Activated T-helper 1 cell treated with anti-CD3 and anti-CD28 coated beads, Interleukin-12 subunit alpha, Interleukin-12 subunit beta, Interleukin-2, Interleukin-4 antibody, amounts not matched to agents 30 ng/mL and 10 ng/mL and 1 ng/mL, durations not matched to agents 14 hours and 24 hours and 36 hours (primary cell): ENCODE measurements at regions of chr13 and their contacts with region 1.

Region 1: GRCh38 chr13:40813661-40814454 is 24.4 kb downstream of the SLC25A15 start:
- DNase-seq: no peak
- H3K4me3 Mint-ChIP-seq: no peak overlapping the region
- H3K27ac Mint-ChIP-seq: no peak overlapping the region
- H3K4me1 Mint-ChIP-seq: peaks cover 7% of the 10 kb centered on the region
- H3K27me3 Mint-ChIP-seq: no peaks in the 10 kb centered on the region

Region 2: DNA sequence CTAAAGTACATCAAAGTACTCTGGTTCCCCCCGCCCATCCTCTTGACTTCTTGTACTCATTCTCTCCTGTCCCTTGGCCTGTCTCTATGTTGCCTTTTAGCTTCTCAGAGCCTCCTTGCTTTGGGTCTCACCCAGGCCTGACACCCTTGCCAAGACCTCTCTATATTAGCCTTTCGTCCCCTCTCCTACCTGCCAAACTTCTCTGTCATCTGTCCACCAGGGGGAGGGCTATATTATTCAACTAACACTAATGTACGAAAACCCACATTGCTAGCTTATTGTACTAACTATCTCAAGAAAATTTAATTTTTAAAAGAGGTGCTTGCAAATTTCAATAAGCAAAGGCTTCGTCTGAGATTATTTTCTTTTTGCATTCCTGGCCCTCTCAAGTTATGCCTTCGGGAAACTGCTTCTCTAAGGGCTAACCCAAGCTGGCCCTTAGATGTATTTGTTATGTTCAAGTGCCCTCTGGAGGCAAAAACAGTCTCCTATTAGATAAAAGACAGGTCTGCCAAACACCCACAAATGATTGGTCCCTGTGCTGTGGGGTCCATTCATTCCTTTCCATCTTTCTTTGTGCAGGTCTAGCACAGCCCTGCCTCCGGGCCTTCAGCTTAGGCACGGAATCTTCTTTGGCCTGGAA is 36.6 kb before region 1 on chr13:
- intact Hi-C with region 1: loop called (anchors 1 kb)
- DNase-seq: peak; percentile 28
- H3K4me3 Mint-ChIP-seq: peak overlapping the region; percentile 76
- H3K27ac Mint-ChIP-seq: peak overlapping the region; percentile 99
- H3K4me1 Mint-ChIP-seq: peaks cover 33% of the 10 kb centered on the region
- H3K27me3 Mint-ChIP-seq: no peaks in the 10 kb centered on the region